Motor neuron (in vitro differentiated cells): ENCODE measurements at regions of chr17 and their contacts with region 1.

Region 1: DNA sequence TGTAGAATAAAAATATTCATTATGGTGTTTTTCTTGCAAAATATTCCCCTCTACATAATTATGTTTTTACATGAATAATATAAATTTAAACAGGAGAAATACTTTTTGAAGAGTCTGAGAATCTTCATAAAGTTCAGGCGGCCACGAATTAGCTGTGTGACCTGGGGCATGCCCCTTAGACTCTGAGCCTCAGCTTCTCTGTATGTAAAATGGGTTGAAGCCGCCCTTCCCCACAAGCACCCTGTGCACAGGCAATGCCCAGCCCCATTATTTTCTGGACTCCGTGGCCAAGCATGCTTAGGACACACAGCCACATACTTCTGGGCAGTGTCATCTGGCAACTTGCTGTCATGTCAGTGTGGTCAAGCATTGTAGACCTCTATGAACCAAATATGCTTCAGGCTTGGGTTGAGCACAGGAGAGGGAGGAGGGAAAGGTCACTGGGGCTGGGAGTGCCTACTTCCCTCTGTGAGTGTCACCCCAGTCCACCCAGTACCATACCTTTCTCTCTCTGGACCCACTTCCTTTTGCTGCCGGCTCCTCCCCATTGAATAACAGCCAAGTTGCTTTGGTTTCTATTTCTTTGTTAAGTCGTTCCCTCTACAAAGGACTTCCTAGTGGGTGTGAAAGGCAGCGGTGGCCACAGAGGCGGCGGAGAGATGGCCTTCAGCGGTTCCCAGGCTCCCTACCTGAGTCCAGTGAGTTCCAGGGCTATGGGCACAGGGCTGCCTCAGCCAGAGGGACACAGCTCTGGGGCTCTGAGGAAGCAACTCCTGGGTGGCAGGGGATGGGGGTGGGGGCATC is at the start of gene LGALS9:
- ATAC-seq: peak in 3 of 8 experiments; percentile 31 to 54 (median 43)
- H3K4me3 ChIP-seq: no peak within 1 kb of the TSS
- H3K27ac ChIP-seq: no peak within 1 kb of the TSS
- H3K4me1 ChIP-seq: no peaks in the 10 kb centered on the region
- total RNA-seq, gene LGALS9: 0.16 to 21.7 (median 1.6) TPM

Region 2: GRCh38 chr17:27256225-27257030 is 374.4 kb before region 1 on chr17:
- in situ Hi-C with region 1: loop called in 1 of 9 experiments (anchors 25 kb)
- ATAC-seq: no peak
- H3K4me3 ChIP-seq: no peak overlapping the region
- H3K27ac ChIP-seq: no peak overlapping the region
- H3K4me1 ChIP-seq: no peaks in the 10 kb centered on the region

Region 3: DNA sequence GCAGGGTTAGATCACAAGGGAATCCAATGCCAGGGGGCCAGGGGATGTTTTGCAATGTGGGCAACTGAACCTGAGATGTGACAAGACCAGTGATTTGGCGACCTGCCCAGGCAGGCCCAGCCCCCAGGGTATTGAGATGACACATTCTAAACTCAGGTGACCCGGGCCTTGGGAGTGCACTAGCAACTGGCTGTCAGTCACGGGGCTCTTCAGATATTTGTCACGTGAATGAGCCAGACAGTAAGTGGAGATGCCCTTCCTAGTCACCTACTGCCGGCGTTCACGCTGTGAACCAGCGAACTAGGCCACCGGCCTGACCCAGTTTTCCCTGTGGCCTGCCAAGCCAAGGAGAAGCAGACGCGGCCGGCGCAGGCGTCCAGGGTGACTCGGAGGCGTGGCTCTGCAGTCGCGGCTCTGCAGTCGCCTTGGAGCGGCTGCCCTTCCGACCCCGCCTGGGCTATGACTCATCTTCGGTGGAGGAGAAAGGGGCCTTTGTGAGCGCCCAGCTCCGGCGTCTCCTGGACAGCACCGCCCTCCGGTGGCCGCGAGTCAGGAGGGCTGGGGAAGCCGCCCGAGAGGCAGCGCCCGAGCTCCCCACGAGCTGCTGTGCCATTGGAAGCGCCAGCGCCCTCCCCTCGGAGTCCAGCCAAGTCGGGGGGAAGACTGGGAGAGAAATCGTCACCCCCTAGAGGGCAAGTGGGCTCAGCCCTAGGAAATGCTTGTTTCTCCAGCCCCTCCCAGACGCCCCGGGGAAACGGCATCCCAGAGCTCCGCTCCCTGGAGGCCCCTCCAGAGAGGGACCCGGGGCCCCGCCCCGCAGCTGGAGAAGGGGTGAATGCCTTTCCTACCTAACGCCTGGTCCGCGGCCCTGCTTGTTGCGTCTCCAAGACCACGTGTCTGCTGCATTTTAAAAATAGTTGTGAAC is 298.1 kb before region 1 on chr17:
- in situ Hi-C with region 1: loop called in 1 of 9 experiments (anchors 25 kb)
- ATAC-seq: peak; percentile 87 to 97 (median 90)
- H3K4me3 ChIP-seq: peak overlapping the region; percentile 20 to 40 (median 27)
- H3K27ac ChIP-seq: peak overlapping the region; percentile 78 to 89
- H3K4me1 ChIP-seq: peaks cover 11 to 21% of the 10 kb centered on the region in 2 donors

Region 4: DNA sequence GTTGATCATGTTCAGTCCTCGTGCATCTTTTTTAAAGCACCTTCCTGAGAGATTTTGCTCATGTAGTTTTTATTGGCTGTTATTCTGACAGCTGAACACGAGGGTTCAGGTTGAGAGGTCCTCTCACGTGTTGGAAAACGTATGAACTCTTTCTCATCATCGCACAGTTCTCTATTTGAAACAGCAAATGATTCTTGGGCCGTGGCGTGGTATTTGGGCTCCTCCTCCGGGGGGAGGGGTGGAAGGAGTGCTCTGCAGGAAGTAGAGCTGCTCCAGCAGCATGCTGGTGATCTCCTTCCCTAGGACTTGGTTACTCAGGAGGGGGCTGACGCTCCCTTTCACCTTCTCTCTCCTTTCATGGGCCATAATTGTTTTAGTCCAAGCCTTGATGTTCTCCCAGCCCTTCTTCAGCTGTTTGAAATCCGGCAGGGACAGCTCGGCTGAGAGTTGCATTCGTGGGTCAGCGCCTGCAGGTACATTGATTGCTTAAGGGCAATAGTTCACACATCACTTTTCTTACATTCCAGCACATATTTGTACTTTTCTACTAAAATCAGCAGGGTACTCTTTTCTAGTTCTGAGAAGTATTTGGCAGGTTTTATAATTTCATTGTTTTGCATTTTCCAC is 104.1 kb before region 1 on chr17:
- in situ Hi-C with region 1: loop called in 1 of 9 experiments (anchors 25 kb)
- ATAC-seq: peak in 6 of 8 experiments; percentile 31 to 73 (median 48)
- H3K4me3 ChIP-seq: no peak overlapping the region
- H3K27ac ChIP-seq: no peak overlapping the region
- H3K4me1 ChIP-seq: peaks cover 21 to 37% of the 10 kb centered on the region in 2 donors

Region 5: DNA sequence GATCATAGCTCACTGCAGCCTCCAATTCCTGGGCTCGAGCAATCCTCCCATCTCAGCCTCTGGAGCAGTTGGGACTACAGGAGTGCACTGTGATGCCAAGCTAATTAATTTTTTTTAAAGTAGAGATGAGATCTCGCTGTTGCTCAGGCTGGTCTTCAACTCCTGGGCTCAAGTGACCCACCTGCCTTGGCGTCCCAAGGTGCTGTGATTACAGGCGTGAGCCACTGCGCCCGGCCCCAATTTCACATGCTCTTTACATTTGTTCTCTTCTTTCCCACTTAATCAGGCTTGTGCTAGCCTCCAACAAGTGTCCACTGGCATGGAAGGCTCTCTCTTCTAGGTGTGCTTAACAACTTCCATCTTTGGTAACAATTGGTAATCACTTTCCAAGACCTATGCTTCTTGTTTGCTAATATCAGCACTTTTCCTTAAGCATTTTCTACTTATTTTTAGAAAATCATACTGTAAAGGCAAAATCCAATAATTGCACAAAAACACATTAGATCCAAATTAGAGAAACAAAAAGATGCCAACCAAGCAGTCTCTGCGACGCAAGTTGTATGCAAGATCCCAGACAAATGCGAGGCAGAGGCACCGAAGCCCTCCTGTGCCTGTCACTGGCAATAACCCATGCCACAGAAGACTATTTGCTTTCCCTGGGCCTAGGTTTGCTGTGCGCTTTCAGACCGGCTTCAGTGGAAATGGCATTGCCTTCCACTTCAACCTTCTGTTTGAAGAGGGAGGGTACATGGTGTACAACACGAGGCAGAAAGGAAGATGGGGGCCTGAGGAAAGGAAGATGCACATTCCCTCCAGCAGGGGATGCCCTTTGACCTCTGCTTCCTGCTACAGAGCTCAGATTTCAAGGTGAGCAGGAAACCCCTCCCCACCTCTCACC is 116.9 kb after region 1 on chr17:
- in situ Hi-C with region 1: loop called in 1 of 9 experiments (anchors 25 kb)
- ATAC-seq: no peak
- H3K4me3 ChIP-seq: no peak overlapping the region
- H3K27ac ChIP-seq: no peak overlapping the region
- H3K4me1 ChIP-seq: no peaks in the 10 kb centered on the region